ENCODE measurements at regions of chr1 and their contacts with region 1.

Region 1: DNA sequence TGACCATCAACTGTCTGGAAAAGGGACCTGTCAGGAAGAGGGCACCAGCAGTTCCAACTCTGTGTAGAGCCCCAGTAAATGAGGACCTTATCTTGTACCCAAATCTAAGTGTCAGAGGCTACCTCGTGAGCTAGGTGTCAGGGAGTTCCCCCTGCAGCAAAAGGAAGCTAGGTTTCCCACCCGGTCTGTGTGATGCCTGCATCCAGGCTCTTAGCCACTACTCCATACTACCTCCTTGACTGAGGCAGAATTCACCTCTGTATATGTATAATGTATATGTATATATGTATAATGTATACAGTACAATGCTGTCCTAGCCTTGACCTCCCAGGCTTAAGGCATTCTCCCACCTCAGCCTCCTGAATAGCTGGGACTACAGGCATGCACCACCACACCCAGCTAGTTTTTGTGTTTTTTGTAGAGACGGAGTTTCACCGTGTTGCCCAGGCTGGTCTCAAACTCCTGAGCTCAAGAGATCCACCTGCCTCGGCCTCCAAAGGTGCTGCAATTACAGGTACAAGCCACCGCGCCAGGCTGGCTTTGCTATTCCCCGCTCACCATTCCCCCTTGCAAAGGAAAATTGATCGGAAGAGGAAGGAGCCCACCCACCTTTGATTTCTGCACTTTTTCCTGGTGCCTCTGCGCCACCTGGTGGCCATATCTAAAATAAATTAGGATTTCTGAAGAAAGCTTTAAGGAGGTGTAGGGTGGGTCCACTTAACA is 15.7 kb upstream of the LUZP1 start:
- DNase-seq: peak in 8 of 9 experiments; percentile 17 to 75 (median 43)
- ATAC-seq: peak; percentile 48
- H3K4me3 ChIP-seq: peak overlapping the region in 1 of 2 experiments; percentile 3
- H3K4me3 Mint-ChIP-seq: peak overlapping the region; percentile 74
- H3K27ac ChIP-seq: no peak overlapping the region
- H3K27ac Mint-ChIP-seq: no peak overlapping the region
- H3K4me1 ChIP-seq: no peaks in the 10 kb centered on the region
- H3K4me1 Mint-ChIP-seq: peaks cover 8% of the 10 kb centered on the region
- H3K27me3 ChIP-seq: no peaks in the 10 kb centered on the region
- H3K27me3 Mint-ChIP-seq: peaks cover 4% of the 10 kb centered on the region
- CTCF ChIP-seq: peak; percentile 94

Region 2: DNA sequence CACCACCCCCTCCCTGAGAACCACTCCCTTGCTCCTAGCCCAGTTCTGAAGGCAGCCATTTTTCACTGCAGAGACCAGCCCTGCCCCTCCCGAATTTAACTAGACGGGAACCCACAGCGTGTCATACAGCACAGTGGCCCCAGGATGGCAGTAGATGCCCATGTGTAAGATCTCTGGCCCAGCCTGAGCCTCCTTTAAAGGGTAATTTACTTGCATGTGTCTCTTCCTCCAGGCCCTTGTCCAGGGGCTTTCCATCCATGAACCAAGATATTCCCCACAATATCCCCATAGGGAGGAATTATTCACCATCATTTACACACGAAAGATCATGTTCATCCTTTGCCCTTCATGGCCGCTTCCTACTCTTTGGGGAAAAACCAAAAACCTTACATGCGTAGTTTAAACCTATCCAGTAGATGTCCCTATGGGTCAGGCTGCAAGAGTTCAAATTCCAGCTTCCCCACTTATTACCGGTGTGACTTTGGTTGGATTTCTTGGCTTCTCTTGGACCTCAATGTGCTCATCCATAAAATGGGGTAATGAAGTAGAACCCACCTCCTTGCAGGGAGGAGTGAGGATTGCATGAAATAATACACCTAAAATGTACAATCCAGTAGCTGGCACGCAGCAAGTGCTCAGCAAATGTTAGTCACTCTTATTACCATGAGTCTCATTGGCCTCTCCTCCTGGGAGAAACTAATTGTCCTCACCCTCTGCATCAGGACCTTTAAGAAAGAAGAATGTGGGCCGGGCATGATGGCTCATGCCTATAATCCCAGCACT is 207.7 kb before region 1 on chr1:
- CTCF ChIA-PET with region 1: interaction called, 4 read pairs
- POLR2A ChIA-PET with region 1: no interaction called
- intact Hi-C with region 1: loop called in 1 of 2 experiments (anchors 1 kb)
- DNase-seq: peak; percentile 15 to 65 (median 44)
- ATAC-seq: peak; percentile 93
- H3K4me3 ChIP-seq: no peak overlapping the region
- H3K4me3 Mint-ChIP-seq: no peak overlapping the region
- H3K27ac ChIP-seq: no peak overlapping the region
- H3K27ac Mint-ChIP-seq: no peak overlapping the region
- H3K4me1 ChIP-seq: no peaks in the 10 kb centered on the region
- H3K4me1 Mint-ChIP-seq: no peaks in the 10 kb centered on the region
- H3K27me3 ChIP-seq: no peaks in the 10 kb centered on the region
- H3K27me3 Mint-ChIP-seq: peaks cover 40% of the 10 kb centered on the region
- CTCF ChIP-seq: peak; percentile 49

Region 3: DNA sequence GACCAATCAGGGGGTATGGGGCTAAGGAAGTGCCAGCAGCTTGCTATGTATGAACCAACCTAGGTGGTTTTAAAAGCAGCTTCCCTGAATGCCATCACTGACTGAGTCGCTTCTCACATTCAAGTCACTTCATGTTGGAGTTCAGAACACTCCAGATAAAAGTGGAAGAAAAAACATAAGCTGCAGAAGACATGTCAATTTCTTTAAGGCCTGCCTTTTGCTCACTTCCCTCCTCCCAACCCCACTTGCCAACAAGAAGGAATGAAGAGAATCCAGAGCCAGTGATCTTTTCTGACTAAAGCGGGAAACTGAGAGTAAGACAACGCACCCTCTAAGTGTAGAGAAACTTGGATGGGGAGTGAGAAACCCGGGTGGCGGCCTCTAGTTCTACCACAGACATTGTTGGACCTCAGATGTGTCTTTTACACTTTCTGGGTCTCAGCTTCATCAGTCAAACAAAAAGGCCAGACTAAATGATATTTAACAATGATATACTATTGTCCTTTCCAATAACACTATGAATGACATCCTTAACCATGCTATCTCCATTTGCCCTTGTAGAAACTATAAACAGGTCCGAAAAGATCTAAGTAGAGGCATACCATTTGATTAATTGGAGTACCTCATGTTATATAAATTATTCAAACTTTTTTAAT is 69.8 kb before region 1 on chr1:
- CTCF ChIA-PET with region 1: interaction called, 73 read pairs
- POLR2A ChIA-PET with region 1: interaction called, 3 read pairs
- intact Hi-C with region 1: no loop called
- DNase-seq: peak in 1 of 9 experiments; percentile 18
- ATAC-seq: no peak
- H3K4me3 ChIP-seq: no peak overlapping the region
- H3K4me3 Mint-ChIP-seq: no peak overlapping the region
- H3K27ac ChIP-seq: no peak overlapping the region
- H3K27ac Mint-ChIP-seq: peak overlapping the region; percentile 60
- H3K4me1 ChIP-seq: peaks cover 34% of the 10 kb centered on the region
- H3K4me1 Mint-ChIP-seq: peaks cover 65% of the 10 kb centered on the region
- H3K27me3 ChIP-seq: no peaks in the 10 kb centered on the region
- H3K27me3 Mint-ChIP-seq: no peaks in the 10 kb centered on the region
- CTCF ChIP-seq: no peak

Region 4: DNA sequence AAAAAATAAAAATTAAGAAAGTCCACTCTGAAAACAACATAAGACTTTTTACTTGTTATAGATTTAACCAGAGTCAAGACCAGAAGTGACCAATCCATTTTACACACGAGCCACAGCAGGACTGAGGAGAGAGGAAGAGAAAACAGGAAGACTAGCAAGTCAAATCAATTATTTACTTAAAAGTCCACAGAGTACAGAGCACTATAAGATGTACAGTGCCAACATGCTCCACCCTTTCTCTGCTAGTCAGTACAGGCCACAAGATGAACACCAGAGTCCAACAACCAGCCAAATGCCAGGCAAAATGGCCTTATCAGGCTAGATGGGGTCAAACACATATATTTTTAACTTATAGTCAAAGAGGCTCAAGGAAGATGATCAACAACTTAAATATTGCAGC is 35.3 kb before region 1 on chr1:
- CTCF ChIA-PET with region 1: interaction called, 12 read pairs
- POLR2A ChIA-PET with region 1: no interaction called
- intact Hi-C with region 1: loop called in 1 of 2 experiments (anchors 5 kb)
- DNase-seq: no peak
- ATAC-seq: no peak
- H3K4me3 ChIP-seq: no peak overlapping the region
- H3K4me3 Mint-ChIP-seq: no peak overlapping the region
- H3K27ac ChIP-seq: no peak overlapping the region
- H3K27ac Mint-ChIP-seq: no peak overlapping the region
- H3K4me1 ChIP-seq: peaks cover 14% of the 10 kb centered on the region
- H3K4me1 Mint-ChIP-seq: peaks cover 42% of the 10 kb centered on the region
- H3K27me3 ChIP-seq: no peaks in the 10 kb centered on the region
- H3K27me3 Mint-ChIP-seq: no peaks in the 10 kb centered on the region
- CTCF ChIP-seq: no peak

Region 5: GRCh38 chr1:23168457-23169194 is 15.7 kb before region 1 on chr1 and contains the start of gene LUZP1:
- CTCF ChIA-PET with region 1: interaction called, 39 read pairs
- POLR2A ChIA-PET with region 1: interaction called, 4 read pairs
- intact Hi-C with region 1: no loop called
- DNase-seq: peak; percentile 67 to 94 (median 87)
- ATAC-seq: peak; percentile 90
- H3K4me3 ChIP-seq: peak within 1 kb of the TSS; percentile 85 to 93
- H3K4me3 Mint-ChIP-seq: peak within 1 kb of the TSS; percentile 94
- H3K27ac ChIP-seq: peak within 1 kb of the TSS; percentile 75
- H3K27ac Mint-ChIP-seq: peak within 1 kb of the TSS; percentile 86
- H3K4me1 ChIP-seq: peaks cover 20% of the 10 kb centered on the region
- H3K4me1 Mint-ChIP-seq: peaks cover 42% of the 10 kb centered on the region
- H3K27me3 ChIP-seq: no peaks in the 10 kb centered on the region
- H3K27me3 Mint-ChIP-seq: no peaks in the 10 kb centered on the region
- CTCF ChIP-seq: no peak
- total RNA-seq, gene LUZP1: 51.0 to 52.5 TPM

Measured in CD8-positive, alpha-beta T cell (primary cell).